ENCODE measurements at regions of chr6 and their contacts with region 1.

Region 1: GRCh38 chr6:89829591-89830385 is at the start of gene CASP8AP2:
- DNase-seq: peak; percentile 97
- H3K4me3 ChIP-seq: peak within 1 kb of the TSS; percentile 79 to 89 (median 84)
- H3K27ac ChIP-seq: peak within 1 kb of the TSS; percentile 88 to 97 (median 92)
- H3K4me1 ChIP-seq: peaks cover 4 to 14% (median 10%) of the 10 kb centered on the region in 4 donors
- H3K27me3 ChIP-seq: no peaks in the 10 kb centered on the region
- CTCF ChIP-seq: no peak
- EP300 ChIP-seq: no peak
- POLR2A ChIP-seq: no peak
- total RNA-seq, gene CASP8AP2: 8.0 to 19.8 (median 15.1) TPM

Region 2: DNA sequence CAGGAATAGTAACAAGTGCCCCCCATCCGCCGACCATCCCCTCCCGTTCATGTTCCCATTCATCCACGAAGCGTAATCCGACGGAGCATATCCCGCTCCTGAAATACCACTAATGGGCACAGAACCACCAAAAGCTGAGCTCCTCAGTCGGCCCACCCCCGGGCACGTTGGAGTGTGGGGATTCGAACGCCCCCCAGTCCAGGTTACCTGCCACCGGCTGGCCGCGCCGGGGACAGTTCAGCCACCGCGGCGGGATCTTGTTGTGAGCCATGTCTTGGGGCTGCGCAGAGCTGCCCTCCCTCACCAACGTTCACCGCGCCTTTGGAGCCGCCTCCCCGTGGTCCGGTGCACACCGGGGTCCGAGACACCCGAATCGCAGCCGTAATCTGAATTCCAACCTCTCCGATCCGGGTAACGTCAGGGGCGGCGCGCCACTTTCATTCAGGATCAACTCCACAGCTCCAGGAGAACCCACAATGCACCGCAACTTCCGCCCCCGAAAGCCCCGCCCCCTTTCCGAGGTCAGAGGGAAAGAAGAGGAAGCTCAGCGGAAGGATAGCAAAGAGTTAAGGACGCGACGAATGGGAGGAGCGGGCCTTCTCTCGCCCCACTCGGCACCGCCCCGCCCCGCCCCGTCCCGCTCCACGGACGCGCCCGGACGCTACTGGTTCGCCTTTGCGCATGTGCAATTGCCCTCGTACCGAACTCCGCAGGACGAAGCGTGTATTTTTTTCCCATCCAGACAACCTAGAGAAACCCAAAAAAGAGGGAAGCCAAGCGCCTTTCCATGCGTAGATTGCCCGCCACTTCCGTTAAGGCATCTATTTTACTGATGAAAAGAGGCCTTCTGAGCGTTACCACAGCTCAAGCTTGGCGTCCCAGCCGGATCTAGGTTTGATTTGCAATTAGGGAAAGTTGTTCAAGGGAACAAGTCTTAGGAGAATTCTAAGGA is 866.4 kb before region 1 on chr6 and contains the start of gene RNGTT:
- in situ Hi-C with region 1: loop called in 1 of 4 experiments (anchors 25 kb)
- intact Hi-C with region 1: no loop called
- DNase-seq: peak; percentile 100
- H3K4me3 ChIP-seq: peak within 1 kb of the TSS; percentile 57 to 93 (median 82)
- H3K27ac ChIP-seq: peak within 1 kb of the TSS; percentile 83 to 92 (median 89)
- H3K4me1 ChIP-seq: peaks cover 7 to 19% (median 16%) of the 10 kb centered on the region in 4 donors
- H3K27me3 ChIP-seq: no peaks in the 10 kb centered on the region
- CTCF ChIP-seq: no peak
- EP300 ChIP-seq: no peak
- POLR2A ChIP-seq: peak; percentile 41
- total RNA-seq, gene RNGTT: 5.4 to 20.9 (median 15.2) TPM

Region 3: GRCh38 chr6:89921691-89922090 is 91.9 kb after region 1 on chr6:
- in situ Hi-C with region 1: no loop called
- intact Hi-C with region 1: no loop called
- DNase-seq: no peak
- H3K4me3 ChIP-seq: no peak overlapping the region
- H3K27ac ChIP-seq: no peak overlapping the region
- H3K4me1 ChIP-seq: no peaks in the 10 kb centered on the region
- H3K27me3 ChIP-seq: no peaks in the 10 kb centered on the region
- CTCF ChIP-seq: no peak
- EP300 ChIP-seq: no peak
- POLR2A ChIP-seq: no peak